T-cell (primary cell): ENCODE measurements at regions of chr5 and their contacts with region 1.

Region 1: DNA sequence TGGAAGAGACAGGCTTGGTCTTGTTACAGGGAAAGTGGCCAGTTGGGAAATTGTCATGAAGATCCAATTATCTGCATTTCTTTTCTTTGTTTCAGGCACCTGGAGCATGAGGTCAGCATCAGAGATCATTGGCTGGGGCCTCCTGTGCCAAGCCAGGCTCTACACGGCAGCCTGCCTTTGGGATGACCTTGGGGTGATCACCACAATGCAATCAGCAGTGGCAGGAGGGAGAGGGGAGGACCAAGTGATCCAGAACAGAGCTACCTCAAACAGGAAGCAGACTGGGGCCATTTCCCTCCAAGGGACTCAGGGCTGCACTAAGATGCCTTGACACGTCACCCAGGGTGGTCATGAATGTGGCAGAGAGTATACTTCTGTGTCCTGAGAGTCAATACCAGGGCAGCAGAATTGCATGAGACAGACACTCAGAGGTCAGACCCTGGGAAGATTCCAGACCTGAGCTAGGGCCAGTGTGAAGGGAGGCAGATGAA is 8.9 kb downstream of the SMIM23 start:
- DNase-seq: no peak
- ATAC-seq: no peak
- H3K4me3 ChIP-seq: no peak overlapping the region
- H3K4me3 Mint-ChIP-seq: no peak overlapping the region
- H3K27ac ChIP-seq: no peak overlapping the region
- H3K27ac Mint-ChIP-seq: no peak overlapping the region
- H3K4me1 ChIP-seq: no peaks in the 10 kb centered on the region
- H3K4me1 Mint-ChIP-seq: no peaks in the 10 kb centered on the region
- H3K27me3 ChIP-seq: peaks cover 0 to 12% of the 10 kb centered on the region in 2 experiments
- H3K27me3 Mint-ChIP-seq: peaks cover 12 to 16% of the 10 kb centered on the region in 2 donors

Region 2: DNA sequence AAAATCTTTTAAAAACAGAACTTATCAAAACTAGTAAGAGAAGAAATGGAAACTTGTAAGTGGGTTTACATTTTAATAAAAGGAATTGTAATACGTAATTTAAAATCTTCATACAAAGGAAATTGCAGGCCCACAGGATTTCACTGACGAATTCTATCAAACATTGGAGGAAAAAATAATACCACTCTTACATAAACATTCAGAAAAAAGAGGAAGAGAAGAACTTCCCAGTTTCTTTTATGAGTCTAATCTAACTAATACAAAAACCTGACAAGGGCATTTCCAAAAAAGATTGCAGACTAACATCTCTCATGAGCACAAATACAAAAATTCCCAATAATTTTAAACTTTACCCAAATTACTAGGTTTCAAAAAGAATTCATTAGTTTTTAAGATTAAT is 783.7 kb before region 1 on chr5:
- CTCF ChIA-PET with region 1: no interaction called
- POLR2A ChIA-PET with region 1: interaction called in 1 of 2 experiments, 13 read pairs
- DNase-seq: no peak
- ATAC-seq: no peak
- H3K4me3 ChIP-seq: no peak overlapping the region
- H3K4me3 Mint-ChIP-seq: no peak overlapping the region
- H3K27ac ChIP-seq: no peak overlapping the region
- H3K27ac Mint-ChIP-seq: no peak overlapping the region
- H3K4me1 ChIP-seq: no peaks in the 10 kb centered on the region
- H3K4me1 Mint-ChIP-seq: no peaks in the 10 kb centered on the region
- H3K27me3 ChIP-seq: no peaks in the 10 kb centered on the region
- H3K27me3 Mint-ChIP-seq: no peaks in the 10 kb centered on the region